ENCODE measurements at regions of chr12 and their contacts with region 1.

Region 1: DNA sequence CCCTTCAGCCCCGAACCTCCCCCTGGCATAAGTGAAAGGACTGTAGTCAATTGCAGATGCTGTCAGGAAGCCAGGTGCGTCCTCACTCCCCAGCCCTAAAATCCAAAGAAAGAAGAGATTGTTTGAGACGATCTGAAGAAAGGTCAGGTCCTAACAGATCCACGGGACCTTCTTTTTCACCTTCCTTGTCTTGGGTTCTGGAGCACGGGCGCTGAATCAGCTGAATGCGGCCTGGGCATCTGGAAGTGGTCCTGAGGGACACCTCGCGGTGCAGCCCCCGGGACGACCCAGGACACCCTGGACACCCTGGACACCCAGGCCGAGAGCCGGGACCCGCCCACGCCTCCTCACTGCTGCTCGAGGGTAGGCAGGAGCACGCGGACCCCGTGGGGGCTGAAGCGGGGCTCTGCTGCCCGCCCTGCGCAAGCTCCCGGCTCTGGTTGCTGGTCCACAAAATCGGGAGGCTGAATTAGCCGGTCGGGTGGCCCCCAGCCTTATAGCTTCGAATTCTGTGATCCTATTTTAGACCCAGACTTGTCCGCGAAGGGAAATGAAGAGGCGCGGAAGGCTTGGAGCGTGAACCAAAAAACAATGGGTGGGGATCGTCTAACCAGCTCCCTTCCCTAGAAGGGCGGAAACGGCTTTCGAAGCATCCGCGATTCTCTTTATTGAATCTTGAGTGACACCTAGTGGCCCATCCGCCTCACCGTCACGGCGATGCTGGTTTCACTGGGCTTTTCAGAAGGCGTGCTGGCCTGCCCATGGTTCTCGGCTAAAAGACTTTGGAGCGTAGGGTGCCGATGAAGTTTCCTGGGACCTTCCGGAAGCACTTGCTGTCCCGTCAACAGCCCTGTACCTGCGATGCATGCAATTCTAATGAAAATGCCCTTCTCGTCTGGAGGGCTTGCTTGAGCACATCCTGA is 46.4 kb upstream of the PLXNC1 start:
- DNase-seq: peak; percentile 96
- H3K4me3 ChIP-seq: peak overlapping the region; percentile 77
- H3K27ac ChIP-seq: peak overlapping the region; percentile 19
- H3K4me1 ChIP-seq: peaks cover 37% of the 10 kb centered on the region
- H3K27me3 ChIP-seq: no peaks in the 10 kb centered on the region

Region 2: DNA sequence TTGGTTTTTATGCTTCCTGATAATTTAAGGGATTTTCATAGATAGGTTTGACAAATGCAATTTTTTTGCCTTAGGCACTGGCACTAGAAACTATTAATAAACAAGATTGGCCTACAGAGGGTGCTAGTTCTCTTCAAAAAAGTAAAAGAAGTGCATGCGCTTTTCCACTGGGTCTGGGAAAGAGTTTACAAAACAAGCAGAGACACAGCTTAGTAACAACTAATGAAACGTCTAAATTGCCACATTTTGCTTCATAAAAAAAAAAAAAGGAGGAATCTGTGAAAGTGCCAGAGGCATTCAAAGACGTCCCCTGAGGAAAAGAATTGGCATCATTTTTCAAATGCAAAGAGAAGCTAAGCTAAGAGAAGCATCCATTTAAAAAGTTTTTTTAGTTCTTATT is 1114.6 kb before region 1 on chr12:
- in situ Hi-C with region 1: loop called (anchors 25 kb)
- DNase-seq: peak; percentile 89
- H3K4me3 ChIP-seq: no peak overlapping the region
- H3K27ac ChIP-seq: no peak overlapping the region
- H3K4me1 ChIP-seq: peaks cover 7% of the 10 kb centered on the region
- H3K27me3 ChIP-seq: no peaks in the 10 kb centered on the region

Region 3: GRCh38 chr12:93507165-93507564 is 594.8 kb before region 1 on chr12:
- in situ Hi-C with region 1: loop called (anchors 5 kb)
- DNase-seq: no peak
- H3K4me3 ChIP-seq: no peak overlapping the region
- H3K27ac ChIP-seq: no peak overlapping the region
- H3K4me1 ChIP-seq: no peaks in the 10 kb centered on the region
- H3K27me3 ChIP-seq: no peaks in the 10 kb centered on the region

Region 4: DNA sequence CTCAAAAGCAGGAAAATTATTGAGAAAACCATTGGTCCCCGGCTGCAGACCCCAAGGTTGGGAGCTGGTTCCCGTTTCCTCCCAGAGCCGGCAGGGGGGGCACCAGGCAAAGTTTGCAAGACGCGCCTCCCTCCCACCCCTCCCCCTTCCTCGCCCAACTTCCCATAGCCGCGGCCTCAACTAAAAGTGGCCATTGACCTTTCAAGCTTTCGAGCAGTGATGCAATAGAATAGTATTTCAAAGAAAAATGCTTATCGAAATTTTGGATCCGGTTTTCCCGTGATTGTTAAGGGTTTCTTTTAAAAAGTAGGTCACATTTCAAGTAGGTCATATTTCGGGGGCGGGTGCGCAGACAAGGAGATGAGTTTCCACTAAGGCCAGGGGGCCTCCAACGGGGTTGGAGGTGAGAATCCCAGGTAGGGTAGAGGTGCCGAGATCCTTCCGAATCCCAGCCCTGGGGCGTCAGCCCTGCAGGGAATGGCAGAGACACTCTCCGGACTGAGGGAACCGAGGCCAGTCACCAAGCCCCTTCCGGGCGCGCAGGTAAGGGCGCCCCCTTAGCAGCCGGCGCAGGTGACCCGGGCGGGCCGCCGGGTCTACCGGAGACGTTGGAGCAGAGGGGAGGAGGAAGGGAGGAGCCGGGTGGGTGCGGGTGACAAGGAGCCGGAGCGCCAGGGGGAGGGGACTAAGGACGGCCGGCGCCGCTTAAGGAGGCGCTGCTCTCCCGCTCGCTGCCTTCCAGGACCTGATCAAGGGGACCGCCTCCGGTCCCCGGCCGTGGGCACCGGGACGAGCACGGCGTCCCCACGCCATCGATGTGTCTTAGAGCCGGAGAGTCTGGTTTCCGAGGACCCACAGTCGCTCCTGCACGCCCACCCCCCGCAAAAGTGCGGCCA is 532.1 kb before region 1 on chr12:
- in situ Hi-C with region 1: loop called (anchors 5 kb)
- DNase-seq: peak; percentile 94
- H3K4me3 ChIP-seq: peak overlapping the region; percentile 92
- H3K27ac ChIP-seq: peak overlapping the region; percentile 58
- H3K4me1 ChIP-seq: peaks cover 9% of the 10 kb centered on the region
- H3K27me3 ChIP-seq: no peaks in the 10 kb centered on the region

Region 5: DNA sequence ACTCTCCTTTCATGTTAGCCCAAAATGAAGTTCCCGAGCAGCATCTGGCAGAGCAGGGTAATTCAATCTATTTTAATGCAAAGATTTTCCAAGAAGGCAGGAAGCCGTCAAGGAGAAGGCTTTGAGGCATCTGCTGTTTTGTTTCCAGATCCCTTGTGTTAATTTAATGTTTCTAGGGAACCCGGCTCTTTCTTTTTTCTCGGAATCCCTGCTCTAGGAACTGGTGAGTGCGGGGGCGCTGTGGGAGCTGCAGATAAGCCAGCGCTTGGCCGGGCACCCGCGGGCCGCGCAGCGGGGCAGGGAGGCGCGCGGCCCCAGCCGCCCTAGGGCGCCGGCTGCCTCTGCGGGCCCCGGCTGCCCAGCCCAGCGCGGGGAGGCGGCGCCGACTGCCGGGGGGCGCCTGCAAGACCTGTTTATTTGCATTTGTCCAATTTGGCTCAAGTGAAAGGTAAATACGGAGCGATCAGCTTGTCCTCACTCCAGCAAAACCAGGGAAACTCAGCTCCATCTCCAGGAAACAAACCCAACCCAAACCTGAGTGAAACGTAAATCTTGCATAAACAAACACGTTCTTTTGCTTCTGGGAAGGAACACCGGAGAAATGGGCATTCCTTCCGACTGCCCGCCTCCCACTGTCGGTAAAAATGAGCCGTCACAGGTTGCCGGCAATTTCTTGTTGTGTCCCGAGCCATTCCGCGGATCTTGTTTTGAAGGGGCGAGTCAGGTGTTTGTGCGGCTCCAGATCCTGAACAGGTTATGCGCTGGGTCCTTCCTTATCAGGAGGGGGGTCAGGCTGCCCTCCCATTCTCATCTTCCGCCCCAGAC is 359.7 kb before region 1 on chr12:
- in situ Hi-C with region 1: loop called (anchors 10 kb)
- DNase-seq: peak; percentile 90
- H3K4me3 ChIP-seq: peak overlapping the region; percentile 90
- H3K27ac ChIP-seq: peak overlapping the region; percentile 87
- H3K4me1 ChIP-seq: peaks cover 40% of the 10 kb centered on the region
- H3K27me3 ChIP-seq: no peaks in the 10 kb centered on the region

Region 6: GRCh38 chr12:93894391-93895088 is 207.5 kb before region 1 on chr12:
- in situ Hi-C with region 1: loop called (anchors 10 kb)
- DNase-seq: peak; percentile 85
- H3K4me3 ChIP-seq: no peak overlapping the region
- H3K27ac ChIP-seq: peak overlapping the region; percentile 61
- H3K4me1 ChIP-seq: peaks cover 31% of the 10 kb centered on the region
- H3K27me3 ChIP-seq: no peaks in the 10 kb centered on the region

Region 7: DNA sequence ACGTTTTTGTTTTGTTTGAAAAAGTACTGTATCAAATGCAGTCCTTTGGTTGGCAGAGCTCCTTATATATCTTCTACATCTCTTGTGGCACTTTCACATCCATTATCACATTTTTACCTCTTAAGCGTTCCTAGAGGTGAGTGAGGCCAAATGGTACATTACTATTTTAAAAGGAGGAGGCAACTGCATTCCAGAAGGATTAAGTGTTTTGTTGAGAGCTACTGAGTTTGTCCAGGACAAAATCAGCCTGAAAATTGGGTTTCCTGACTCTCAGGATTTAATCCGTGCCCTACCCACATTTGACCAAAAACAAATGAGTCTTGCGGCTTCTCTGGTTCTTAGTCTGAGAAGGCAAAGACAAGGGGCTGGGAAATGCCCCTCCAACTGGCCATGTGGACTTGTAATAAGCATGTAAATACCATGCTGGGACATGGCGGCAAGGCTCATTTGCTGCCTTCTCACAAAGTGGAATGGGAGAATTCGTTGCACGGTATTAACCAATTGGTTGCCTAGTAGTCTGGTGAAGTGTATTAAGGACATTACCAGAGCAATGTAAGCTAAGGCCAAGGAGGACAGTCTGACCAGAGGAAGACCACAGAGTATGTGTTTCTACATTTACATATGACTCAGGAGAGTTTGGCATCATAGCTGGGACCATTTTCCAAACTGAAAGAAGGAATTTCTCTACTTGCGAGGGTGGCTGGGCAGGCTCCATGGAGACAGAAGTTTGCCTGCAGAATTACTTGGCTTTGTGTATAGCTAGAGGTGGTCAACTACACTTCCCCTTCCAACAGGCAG is 129.4 kb before region 1 on chr12:
- in situ Hi-C with region 1: no loop called
- DNase-seq: peak; percentile 89
- H3K4me3 ChIP-seq: peak overlapping the region; percentile 46
- H3K27ac ChIP-seq: peak overlapping the region; percentile 94
- H3K4me1 ChIP-seq: peaks cover 30% of the 10 kb centered on the region
- H3K27me3 ChIP-seq: no peaks in the 10 kb centered on the region

Measured in GM23248 (cell line).